GM10248 (cell line): ENCODE measurements at regions of chr20 and their contacts with region 1.

Region 1: DNA sequence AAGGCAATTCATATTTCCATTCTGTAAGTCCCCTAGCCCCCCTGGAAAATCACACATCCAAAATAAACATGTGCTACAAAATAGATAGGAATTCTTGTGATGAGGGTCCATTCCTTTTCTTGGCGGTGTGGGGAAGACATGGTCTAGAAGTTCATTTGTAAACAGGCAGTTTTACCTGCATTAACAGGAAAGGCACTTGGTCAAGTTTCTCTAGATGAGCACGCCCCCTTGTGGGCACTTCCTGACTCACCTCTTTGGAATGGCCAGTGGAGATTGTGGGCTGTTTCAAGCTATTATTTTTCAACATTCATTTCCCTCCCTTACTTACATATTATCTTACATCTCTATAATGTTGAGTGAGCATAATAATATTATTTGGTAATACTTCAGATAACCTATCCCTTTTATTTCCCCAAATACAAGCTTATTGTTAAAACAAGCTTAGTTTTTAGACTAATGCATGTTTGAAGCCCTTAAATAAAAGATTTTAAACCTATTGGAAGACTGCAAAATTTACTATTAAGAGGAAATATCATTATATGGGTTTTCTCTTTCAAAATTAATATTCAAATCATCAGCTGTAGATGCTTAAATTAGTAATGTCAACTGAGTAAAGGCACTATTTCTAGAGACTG is 92.1 kb downstream of the TASP1 start:
- DNase-seq: peak; percentile 35
- CTCF ChIP-seq: peak; percentile 74

Region 2: DNA sequence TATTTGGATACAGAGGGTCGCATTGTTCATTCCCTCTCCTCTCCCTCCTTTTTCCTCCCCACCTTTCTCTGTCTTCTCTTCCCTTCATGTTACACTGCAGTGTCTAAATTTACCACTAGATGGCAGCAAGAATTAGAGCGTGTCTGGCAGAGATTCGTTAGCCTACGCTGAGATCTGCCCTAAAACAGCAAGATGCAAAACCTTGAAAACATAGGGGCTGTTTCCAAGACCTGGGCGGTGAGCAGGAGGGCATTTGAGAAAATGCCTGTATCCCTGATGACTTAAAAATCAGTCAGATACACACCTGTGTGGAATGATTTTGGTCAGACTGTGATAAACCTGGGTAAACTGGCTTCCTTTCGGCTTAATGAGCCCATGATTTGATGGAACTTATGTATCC is 427.0 kb before region 1 on chr20:
- CTCF ChIA-PET with region 1: interaction called, 87 read pairs
- POLR2A ChIA-PET with region 1: no interaction called
- DNase-seq: peak; percentile 39
- CTCF ChIP-seq: peak; percentile 93

Region 3: DNA sequence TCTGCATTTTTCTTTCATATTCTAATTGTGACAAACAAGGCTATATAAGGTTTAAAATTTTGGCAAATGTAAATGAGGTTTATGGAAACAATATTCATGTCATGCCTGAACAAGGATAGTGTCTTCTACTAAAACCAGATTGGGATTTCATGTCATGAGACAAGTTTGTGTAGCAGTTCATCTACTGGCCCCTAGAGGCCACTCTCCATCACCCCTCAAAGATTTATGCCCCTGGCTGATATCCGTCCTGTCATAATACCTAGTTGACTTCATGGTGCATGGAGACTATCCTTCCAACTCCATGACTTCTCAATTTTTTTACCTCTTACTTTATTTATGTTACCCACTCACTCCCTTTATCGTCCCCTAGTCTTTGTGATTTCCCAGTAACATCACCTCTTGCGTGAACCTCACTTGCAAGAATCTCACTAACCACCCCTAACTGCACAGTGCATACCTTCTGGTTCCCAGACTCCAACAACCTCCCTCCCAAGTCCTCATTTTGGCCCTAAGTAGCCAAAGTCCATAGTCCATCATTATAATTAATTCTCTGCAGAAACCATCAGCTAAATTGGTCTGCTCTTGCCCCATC is 87.7 kb before region 1 on chr20:
- CTCF ChIA-PET with region 1: interaction called, 24 read pairs
- POLR2A ChIA-PET with region 1: no interaction called
- DNase-seq: peak; percentile 39
- CTCF ChIP-seq: peak; percentile 57

Region 4: DNA sequence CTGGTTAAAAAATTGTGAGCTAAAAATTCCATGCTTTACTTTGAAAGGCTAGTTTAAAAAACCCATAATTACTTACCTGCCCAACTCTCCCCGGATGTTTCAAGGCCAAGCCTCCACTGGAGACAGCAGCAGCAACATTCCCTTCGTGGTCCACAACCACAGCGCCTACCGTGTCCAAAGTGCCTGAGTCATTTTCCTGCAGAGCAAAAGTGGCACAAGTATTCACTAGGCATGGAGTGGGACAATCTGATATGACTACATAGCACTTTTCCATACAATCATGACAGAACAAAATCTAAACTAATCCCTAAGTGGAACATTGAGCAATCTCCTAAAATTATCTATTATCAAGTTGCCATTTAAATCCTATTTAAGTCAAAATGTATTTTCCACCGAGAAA is 12.7 kb before region 1 on chr20:
- CTCF ChIA-PET with region 1: interaction called, 64 read pairs
- POLR2A ChIA-PET with region 1: no interaction called
- DNase-seq: no peak
- CTCF ChIP-seq: no peak

Region 5: GRCh38 chr20:13632431-13632830 is 85.8 kb after region 1 on chr20:
- CTCF ChIA-PET with region 1: no interaction called
- POLR2A ChIA-PET with region 1: no interaction called
- DNase-seq: no peak
- CTCF ChIP-seq: no peak

Region 6: GRCh38 chr20:13703265-13703664 is 156.7 kb after region 1 on chr20:
- CTCF ChIA-PET with region 1: no interaction called
- POLR2A ChIA-PET with region 1: no interaction called
- DNase-seq: no peak
- CTCF ChIP-seq: no peak

Region 7: DNA sequence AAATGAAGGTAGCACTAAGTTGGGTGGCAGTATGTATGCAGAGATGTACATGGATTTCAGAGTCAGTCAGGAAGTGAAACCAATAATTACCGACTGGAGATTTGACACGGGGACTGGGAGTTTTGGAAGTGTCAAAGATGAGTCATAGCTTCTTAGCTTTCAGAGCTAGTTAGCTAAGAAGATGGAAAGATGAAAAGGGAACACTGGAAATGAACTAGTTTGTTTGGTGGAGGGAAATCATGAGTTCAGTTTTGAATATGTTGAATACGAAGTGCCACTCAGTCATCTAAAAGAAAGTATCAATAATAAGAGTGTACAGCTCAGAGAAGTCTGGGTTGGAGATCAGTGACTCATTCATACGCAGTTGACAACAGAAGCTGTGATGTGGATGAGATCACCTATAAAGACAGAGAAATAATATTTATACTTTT is 230.6 kb after region 1 on chr20:
- CTCF ChIA-PET with region 1: interaction called, 18 read pairs
- POLR2A ChIA-PET with region 1: no interaction called
- DNase-seq: no peak
- CTCF ChIP-seq: no peak